ENCODE measurements at regions of chr7 and their contacts with region 1.

Region 1: GRCh38 chr7:31134246-31135188 is 82.4 kb downstream of the ADCYAP1R1 start:
- DNase-seq: peak; percentile 64 to 80 (median 70)
- ATAC-seq: peak; percentile 89 to 97 (median 93)
- H3K4me3 ChIP-seq: no peak overlapping the region
- H3K27ac ChIP-seq: peak overlapping the region in 3 of 12 donors; percentile 5 to 22 (median 7)
- H3K4me1 ChIP-seq: peaks cover 0 to 5% (median 0%) of the 10 kb centered on the region in 12 donors
- H3K27me3 ChIP-seq: peaks cover 0 to 5% (median 0%) of the 10 kb centered on the region in 9 donors
- CTCF ChIP-seq: peak; percentile 66 to 83 (median 76)
- POLR2A ChIP-seq: no peak

Region 2: GRCh38 chr7:31204071-31204470 is 69.6 kb after region 1 on chr7:
- intact Hi-C with region 1: no loop called
- DNase-seq: no peak
- ATAC-seq: no peak
- H3K4me3 ChIP-seq: no peak overlapping the region
- H3K27ac ChIP-seq: no peak overlapping the region
- H3K4me1 ChIP-seq: no peaks in the 10 kb centered on the region
- H3K27me3 ChIP-seq: peaks cover 0 to 7% (median 0%) of the 10 kb centered on the region in 9 donors
- CTCF ChIP-seq: no peak
- POLR2A ChIP-seq: no peak

Region 3: GRCh38 chr7:31432836-31433340 is 298.4 kb after region 1 on chr7:
- intact Hi-C with region 1: loop called in 1 of 10 experiments (anchors 10 kb)
- DNase-seq: no peak
- ATAC-seq: peak in 1 of 4 donors; percentile 52
- H3K4me3 ChIP-seq: no peak overlapping the region
- H3K27ac ChIP-seq: no peak overlapping the region
- H3K4me1 ChIP-seq: no peaks in the 10 kb centered on the region
- H3K27me3 ChIP-seq: peaks cover 0 to 23% (median 0%) of the 10 kb centered on the region in 9 donors
- CTCF ChIP-seq: no peak
- POLR2A ChIP-seq: no peak

Region 4: GRCh38 chr7:31443457-31443856 is 308.9 kb after region 1 on chr7:
- intact Hi-C with region 1: loop called in 2 of 10 experiments (anchors 5 to 10 kb)
- DNase-seq: no peak
- ATAC-seq: peak in 2 of 4 donors; percentile 55 to 62
- H3K4me3 ChIP-seq: no peak overlapping the region
- H3K27ac ChIP-seq: no peak overlapping the region
- H3K4me1 ChIP-seq: no peaks in the 10 kb centered on the region
- H3K27me3 ChIP-seq: peaks cover 0 to 30% (median 3%) of the 10 kb centered on the region in 9 donors
- CTCF ChIP-seq: peak; percentile 62 to 86 (median 76)
- POLR2A ChIP-seq: no peak

Region 5: GRCh38 chr7:31642681-31643116 is 508.2 kb after region 1 on chr7:
- intact Hi-C with region 1: loop called in 1 of 10 experiments (anchors 5 kb)
- DNase-seq: no peak
- ATAC-seq: no peak
- H3K4me3 ChIP-seq: no peak overlapping the region
- H3K27ac ChIP-seq: no peak overlapping the region
- H3K4me1 ChIP-seq: peaks cover 0 to 3% (median 0%) of the 10 kb centered on the region in 12 donors
- H3K27me3 ChIP-seq: no peaks in the 10 kb centered on the region
- CTCF ChIP-seq: no peak
- POLR2A ChIP-seq: no peak